ENCODE measurements at regions of chr9 and their contacts with region 1.

Region 1: GRCh38 chr9:32579706-32580331 is 6.9 kb upstream of the NDUFB6 start:
- DNase-seq: peak; percentile 33
- H3K4me3 ChIP-seq: no peak overlapping the region
- CTCF ChIP-seq: peak; percentile 96

Region 2: DNA sequence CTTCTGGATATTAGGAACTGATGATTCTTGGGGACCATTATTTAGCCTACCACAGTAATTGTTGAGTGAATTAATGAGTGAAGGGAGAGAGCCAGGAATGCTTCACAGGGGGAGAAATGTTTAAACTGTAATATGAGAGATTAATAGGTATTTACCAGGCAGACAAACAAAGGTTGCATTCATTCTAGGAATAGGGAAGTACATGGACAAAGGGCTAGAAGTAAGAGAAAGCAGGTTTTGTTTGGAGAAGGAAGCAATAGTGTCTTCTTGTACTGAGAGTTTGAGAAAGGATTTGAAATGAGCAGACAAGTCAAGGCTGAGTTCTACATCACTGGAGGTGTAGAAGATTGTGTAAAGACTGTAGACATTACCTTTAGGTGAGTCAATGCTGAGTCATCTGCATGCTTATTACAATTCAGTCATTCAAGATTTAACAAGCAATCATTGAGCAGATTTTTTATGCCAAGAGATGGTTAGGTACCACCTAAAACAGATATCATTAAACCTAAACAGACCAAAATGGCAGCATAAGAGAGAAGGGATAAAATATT is 47.6 kb after region 1 on chr9:
- in situ Hi-C with region 1: no loop called
- DNase-seq: no peak
- H3K4me3 ChIP-seq: no peak overlapping the region
- CTCF ChIP-seq: no peak

Region 3: GRCh38 chr9:32968101-32969011 is 388.5 kb after region 1 on chr9:
- in situ Hi-C with region 1: loop called (anchors 5 kb)
- DNase-seq: peak; percentile 18
- H3K4me3 ChIP-seq: no peak overlapping the region
- CTCF ChIP-seq: peak; percentile 74

Measured in astrocyte of the cerebellum (primary cell).